HepG2 (cell line): ENCODE measurements at regions of chr20 and their contacts with region 1.

Region 1: GRCh38 chr20:62386383-62387218 is at the start of gene RPS21:
- DNase-seq: peak; percentile 92
- ATAC-seq: peak; percentile 84
- H3K4me3 ChIP-seq: peak within 1 kb of the TSS; percentile 97 to 99 (median 99)
- H3K27ac ChIP-seq: peak within 1 kb of the TSS; percentile 66
- H3K4me1 ChIP-seq: peaks cover 36% of the 10 kb centered on the region
- H3K27me3 ChIP-seq: no peaks in the 10 kb centered on the region; a peak in 2 of 5 replicates
- CTCF ChIP-seq: peak; percentile 43; the same call in 1 of the 2 replicates
- EP300 ChIP-seq: peak; percentile 24 to 28; a peak in 1 of 4 replicates
- POLR2A ChIP-seq: peak; percentile 92 to 94
- RAD21 ChIP-seq: peak; percentile 68
- total RNA-seq, gene RPS21: 2,584 and 2,647 TPM in 2 replicates

Region 2: GRCh38 chr20:62302341-62303058 is 84.1 kb before region 1 on chr20 and contains the start of gene ADRM1:
- CTCF ChIA-PET with region 1: interaction called, 57 read pairs
- POLR2A ChIA-PET with region 1: interaction called, 18 read pairs
- in situ Hi-C with region 1: no loop called
- intact Hi-C with region 1: loop called (anchors 1 kb)
- DNase-seq: peak; percentile 97
- ATAC-seq: peak; percentile 73
- H3K4me3 ChIP-seq: peak within 1 kb of the TSS; percentile 74 to 98 (median 93)
- H3K27ac ChIP-seq: peak within 1 kb of the TSS; percentile 97
- H3K4me1 ChIP-seq: peaks cover 50% of the 10 kb centered on the region
- H3K27me3 ChIP-seq: no peaks in the 10 kb centered on the region; a peak in 1 of 5 replicates
- CTCF ChIP-seq: peak; percentile 98
- EP300 ChIP-seq: peak; percentile 80 to 96; a peak in 3 of 4 replicates
- POLR2A ChIP-seq: peak in 1 of 2 experiments; percentile 70; a peak in 3 of 4 replicates
- RAD21 ChIP-seq: peak; percentile 94
- total RNA-seq, gene ADRM1: 143 and 154 TPM in 2 replicates